ENCODE measurements at regions of chr9 and their contacts with region 1.

Region 1: GRCh38 chr9:96661711-96662110 is 6.6 kb upstream of the PRXL2C start:
- DNase-seq: no peak
- H3K4me3 ChIP-seq: no peak overlapping the region
- H3K27ac ChIP-seq: no peak overlapping the region
- H3K4me1 ChIP-seq: no peaks in the 10 kb centered on the region
- H3K27me3 ChIP-seq: no peaks in the 10 kb centered on the region
- CTCF ChIP-seq: no peak
- POLR2A ChIP-seq: no peak

Region 2: DNA sequence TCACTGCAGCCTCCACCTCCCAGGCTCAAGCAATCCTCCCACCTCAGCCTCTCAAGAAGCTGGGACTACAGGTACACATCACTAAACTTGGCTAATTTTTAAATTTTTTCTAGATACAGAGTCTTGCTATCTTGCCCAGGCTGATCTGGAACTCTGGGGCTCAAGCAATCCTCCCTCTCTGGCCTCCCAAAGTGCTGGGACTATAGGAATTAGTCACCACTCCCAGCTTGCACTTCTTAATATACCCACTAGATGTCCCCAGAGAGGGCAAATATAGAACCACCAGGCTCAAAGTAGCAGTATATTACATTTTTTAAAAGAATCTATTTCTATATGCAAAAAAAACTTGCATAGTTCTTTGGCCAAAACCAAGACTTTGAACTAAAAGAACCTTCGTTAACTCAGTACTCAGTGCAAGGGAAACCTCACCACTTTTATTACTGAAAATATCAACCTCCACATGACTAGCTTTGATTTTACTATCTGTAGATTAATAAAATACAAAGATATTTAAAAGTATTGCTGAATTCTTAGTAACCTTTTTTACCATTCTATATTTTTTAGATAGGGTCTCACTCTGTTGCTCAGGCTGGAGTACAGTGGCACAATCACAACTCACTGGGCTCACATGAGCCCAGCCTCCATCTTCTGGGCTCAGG is 333.9 kb before region 1 on chr9:
- intact Hi-C with region 1: loop called (anchors 10 kb)
- DNase-seq: peak; percentile 65
- H3K4me3 ChIP-seq: no peak overlapping the region
- H3K27ac ChIP-seq: no peak overlapping the region
- H3K4me1 ChIP-seq: no peaks in the 10 kb centered on the region
- H3K27me3 ChIP-seq: no peaks in the 10 kb centered on the region
- CTCF ChIP-seq: peak; percentile 75 to 85 (median 79)
- POLR2A ChIP-seq: no peak

Region 3: DNA sequence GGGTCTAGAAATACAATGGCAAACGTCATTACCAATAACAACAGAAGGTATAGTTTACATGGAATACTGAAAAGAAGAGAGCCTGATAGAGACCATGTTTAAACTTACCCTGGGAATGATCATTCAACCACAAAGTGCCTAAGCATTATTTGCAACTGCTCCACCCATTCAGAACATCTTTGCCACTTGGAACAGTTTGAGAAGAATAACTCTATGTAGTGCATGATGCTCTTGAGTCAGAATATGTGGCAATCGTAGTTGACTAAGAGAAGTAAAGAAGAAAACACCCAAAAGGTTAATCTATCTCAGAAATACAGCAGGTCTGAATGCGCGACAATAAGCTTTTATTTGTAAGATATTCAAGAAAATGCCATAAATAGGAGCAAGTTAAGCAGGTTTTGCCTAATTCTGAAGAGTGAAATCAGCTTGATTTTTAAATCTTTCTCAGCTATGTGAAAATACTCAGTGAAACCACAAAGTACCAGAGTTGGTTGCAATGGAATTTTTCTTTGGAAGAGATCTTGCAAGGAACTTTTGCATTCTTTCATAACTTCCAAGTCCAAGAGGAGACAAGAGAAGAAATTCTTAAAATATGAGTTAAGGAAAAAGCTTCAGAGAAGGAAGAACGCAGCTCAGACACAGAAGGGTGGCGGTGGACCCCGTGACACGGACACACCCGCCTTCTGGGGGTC is 147.5 kb before region 1 on chr9:
- intact Hi-C with region 1: no loop called
- DNase-seq: no peak
- H3K4me3 ChIP-seq: no peak overlapping the region
- H3K27ac ChIP-seq: peak overlapping the region; percentile 39 to 62
- H3K4me1 ChIP-seq: peaks cover 23% of the 10 kb centered on the region
- H3K27me3 ChIP-seq: no peaks in the 10 kb centered on the region
- CTCF ChIP-seq: no peak
- POLR2A ChIP-seq: no peak

Region 4: GRCh38 chr9:96777426-96777864 is 115.7 kb after region 1 on chr9:
- intact Hi-C with region 1: no loop called
- DNase-seq: no peak
- H3K4me3 ChIP-seq: peak overlapping the region; percentile 80 to 82
- H3K27ac ChIP-seq: peak overlapping the region; percentile 72 to 78
- H3K4me1 ChIP-seq: peaks cover 5% of the 10 kb centered on the region
- H3K27me3 ChIP-seq: no peaks in the 10 kb centered on the region
- CTCF ChIP-seq: no peak
- POLR2A ChIP-seq: no peak

Measured in testis (tissue), 5 donors.